A673 (cell line): ENCODE measurements at regions of chr2 and their contacts with region 1.

Region 1: GRCh38 chr2:55168221-55169154 is 63.6 kb downstream of the CLHC1 start:
- DNase-seq: peak; percentile 76
- H3K4me3 ChIP-seq: no peak overlapping the region
- H3K27ac ChIP-seq: peak overlapping the region; percentile 26
- H3K4me1 ChIP-seq: peaks cover 8% of the 10 kb centered on the region
- H3K27me3 ChIP-seq: no peaks in the 10 kb centered on the region
- CTCF ChIP-seq: peak; percentile 80

Region 2: DNA sequence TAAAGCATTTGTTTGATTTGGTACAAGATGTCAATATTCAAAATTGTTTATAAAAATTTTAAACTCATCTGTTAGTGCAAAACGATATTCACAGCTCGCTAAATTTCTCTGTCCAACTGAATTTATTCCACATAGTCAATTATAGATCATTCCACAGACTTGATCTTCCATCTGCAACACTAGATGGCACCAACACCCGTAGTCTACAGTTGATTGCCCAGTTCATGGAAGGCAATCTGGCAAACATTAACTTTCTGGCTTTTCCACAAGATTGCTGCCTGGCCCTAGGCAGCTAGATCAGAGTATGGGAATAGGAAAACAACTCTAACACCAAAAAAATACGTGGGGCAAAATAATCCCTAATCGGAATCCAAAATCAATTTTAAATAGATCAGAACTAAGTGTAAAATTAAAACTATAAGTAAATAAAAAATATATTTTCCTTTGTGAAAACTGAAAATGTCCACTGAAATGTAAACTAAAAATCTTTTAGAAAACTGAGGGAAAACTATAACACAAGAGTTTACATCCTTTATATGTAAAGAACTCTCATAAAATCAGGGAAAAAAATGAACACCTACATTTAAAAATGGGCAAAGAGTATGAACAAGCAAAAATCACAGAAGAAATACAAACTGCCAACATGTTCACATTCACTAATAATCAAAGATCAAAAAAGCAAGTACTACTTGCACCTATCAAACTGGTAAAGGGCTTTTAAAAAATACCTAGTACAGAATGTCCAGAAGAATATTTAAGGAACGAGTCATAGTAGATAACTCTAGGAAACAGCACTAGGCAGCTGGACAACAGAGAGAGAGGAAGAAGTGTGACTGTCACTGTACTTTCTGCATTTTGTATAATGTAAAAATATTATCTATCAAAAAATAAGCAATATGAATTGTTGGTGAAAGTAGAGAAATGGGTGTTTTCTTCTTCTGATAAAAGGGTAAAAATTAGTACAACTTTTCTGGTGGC is 153.2 kb before region 1 on chr2:
- CTCF ChIA-PET with region 1: interaction called, 6 read pairs
- POLR2A ChIA-PET with region 1: no interaction called
- intact Hi-C with region 1: loop called (anchors 2 kb)
- DNase-seq: peak; percentile 83
- H3K4me3 ChIP-seq: no peak overlapping the region
- H3K27ac ChIP-seq: no peak overlapping the region
- H3K4me1 ChIP-seq: peaks cover 47% of the 10 kb centered on the region
- H3K27me3 ChIP-seq: no peaks in the 10 kb centered on the region
- CTCF ChIP-seq: peak; percentile 82